Uterus (tissue), 4 donors: ENCODE measurements at regions of chr1 and their contacts with region 1.

Region 1: DNA sequence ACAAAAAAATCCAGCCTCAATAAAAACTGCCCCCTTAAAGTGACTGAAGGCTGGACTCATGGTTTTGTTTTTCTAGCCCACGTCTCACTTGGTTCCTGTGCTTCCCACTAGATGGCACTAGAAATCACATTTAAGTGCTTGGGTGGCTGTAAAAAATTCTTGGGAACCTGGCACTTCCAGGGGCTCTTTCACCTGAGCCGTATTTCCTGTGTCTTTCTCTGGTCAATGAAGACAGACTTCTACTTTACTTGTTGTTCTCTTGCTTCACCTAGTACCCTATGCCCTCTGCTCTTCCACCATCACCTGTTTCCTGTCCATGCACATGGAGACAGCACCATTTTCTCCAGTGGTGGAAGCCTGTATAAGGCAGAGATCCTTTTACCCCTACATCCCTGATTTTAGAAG is 20.0 kb downstream of the METTL13 start:
- DNase-seq: no peak
- H3K4me3 ChIP-seq: no peak overlapping the region
- H3K27ac ChIP-seq: no peak overlapping the region
- H3K4me1 ChIP-seq: no peaks in the 10 kb centered on the region
- H3K27me3 ChIP-seq: no peaks in the 10 kb centered on the region
- CTCF ChIP-seq: peak; percentile 68 to 77 (median 76)
- POLR2A ChIP-seq: no peak

Region 2: DNA sequence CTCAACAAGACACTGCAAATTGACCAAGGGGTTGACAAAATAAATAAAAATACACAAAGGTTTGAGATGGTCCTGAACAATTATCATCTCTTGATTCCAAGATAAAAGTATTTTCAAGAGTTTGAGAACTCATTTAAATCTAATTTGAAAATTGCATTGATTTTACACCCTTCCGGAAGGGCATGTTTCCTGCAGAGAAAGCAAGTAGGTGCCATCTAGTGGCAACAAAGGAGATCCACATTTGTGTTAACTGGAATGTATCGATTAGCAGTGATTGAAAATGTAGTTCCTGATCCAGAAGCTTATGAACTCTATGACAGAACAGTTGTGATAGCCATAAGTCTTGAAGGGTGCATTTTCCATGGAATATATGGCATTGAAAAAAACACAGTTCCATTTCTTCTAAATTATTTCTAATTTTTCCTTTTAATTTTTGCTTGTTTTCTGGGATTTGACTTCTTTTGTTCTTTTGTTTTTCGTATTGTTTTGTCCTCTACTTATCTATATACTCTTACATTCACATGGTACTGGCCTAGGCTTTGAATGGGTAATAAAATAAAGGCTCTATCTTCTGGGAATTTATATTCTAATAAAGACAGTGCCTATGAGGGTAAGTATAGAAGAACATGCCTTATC is 183.5 kb after region 1 on chr1:
- intact Hi-C with region 1: loop called (anchors 5 kb)
- DNase-seq: no peak
- H3K4me3 ChIP-seq: no peak overlapping the region
- H3K27ac ChIP-seq: no peak overlapping the region
- H3K4me1 ChIP-seq: no peaks in the 10 kb centered on the region
- H3K27me3 ChIP-seq: no peaks in the 10 kb centered on the region
- CTCF ChIP-seq: peak; percentile 53 to 76 (median 65)
- POLR2A ChIP-seq: no peak